Ovary (tissue), 10 donors: ENCODE measurements at regions of chr14 and their contacts with region 1.

Region 1: DNA sequence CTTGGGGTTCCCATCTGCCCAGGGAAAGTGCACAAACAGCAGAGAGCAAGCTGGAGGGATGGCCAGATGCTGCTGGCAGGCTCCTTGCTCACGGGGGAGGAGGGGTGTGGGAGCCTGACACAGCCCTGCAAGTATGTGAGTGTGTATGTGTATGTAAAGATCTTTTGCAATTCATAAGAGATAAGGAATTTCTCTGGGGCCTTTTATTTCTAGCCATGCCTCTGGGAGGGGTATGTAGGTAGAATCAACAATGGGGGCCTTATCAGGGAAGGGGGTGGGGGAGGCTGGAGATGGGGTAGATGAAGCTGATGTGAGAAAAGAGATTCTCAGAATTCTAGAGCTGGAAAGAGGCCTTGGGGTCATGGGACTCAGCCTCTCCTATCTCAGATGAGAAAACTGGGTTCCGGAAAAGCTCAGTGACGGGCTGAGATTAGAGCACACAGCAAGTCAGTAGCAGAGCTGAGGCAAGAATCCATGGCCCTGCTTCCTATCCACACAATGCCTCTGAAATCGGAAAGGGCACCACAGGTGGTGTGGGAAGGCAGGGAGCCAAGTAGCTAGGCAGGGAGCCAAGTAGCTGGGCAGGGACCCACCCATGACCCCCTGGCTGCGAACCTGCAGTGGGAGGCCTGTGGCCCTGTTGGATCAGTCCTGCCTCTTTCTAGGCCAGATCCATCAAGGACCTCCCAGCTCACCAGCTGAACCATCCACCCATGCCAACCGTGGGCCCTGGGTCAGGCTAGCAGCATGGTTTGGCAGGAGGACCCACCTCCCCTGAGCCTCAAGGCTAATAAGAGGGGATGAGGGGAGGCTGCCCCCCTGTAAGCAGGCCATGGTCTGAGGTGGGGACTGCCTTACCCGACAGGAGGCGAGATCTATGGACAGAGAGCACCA is 54.7 kb downstream of the PLEKHG3 start:
- DNase-seq: peak; percentile 68 to 80 (median 75)
- H3K4me3 ChIP-seq: no peak overlapping the region
- H3K27ac ChIP-seq: peak overlapping the region; percentile 18 to 60
- H3K4me1 ChIP-seq: peaks cover 34% of the 10 kb centered on the region
- H3K27me3 ChIP-seq: no peaks in the 10 kb centered on the region
- CTCF ChIP-seq: no peak
- EP300 ChIP-seq: no peak
- POLR2A ChIP-seq: no peak

Region 2: DNA sequence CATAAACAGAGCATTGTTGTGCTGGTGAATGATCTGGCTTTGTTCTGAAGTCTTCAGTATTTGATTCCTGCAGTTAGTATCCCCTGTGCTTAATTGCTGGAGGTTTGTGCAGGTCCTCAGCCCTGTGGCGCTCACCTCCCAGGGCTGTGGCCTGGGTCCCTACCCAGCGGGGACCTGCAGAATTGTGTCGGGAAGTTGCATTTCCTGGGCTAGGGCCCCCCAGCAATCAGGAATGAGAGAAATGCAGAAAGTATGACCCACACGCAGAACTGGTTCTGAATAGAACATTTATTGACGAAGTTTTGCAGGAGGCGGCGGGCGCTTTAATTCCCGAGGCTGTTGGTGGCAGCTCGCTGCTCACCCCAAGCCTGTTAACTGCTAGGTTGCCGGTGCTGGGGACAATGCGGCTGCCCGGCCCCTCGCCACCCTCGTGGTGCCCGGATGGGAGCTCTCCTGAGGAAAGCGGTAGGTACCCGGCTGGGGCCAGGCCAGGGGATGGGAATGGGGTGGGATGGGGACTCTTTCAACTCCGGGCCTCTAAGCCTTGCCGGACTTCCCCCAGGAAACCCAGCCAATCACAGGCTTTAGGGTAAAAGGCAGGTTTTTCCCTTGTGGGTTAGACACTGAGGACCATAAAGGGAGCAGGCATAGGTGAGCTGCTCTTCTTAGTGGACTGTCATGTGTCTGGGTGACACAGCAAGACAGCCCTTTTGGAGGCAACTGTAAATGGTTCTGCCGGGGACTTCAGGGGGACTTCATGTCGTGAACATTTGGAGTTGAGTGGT is 43.1 kb before region 1 on chr14:
- intact Hi-C with region 1: loop called in 1 of 4 experiments (anchors 5 kb)
- DNase-seq: peak in 3 of 5 donors; percentile 38 to 62 (median 48)
- H3K4me3 ChIP-seq: peak overlapping the region; percentile 38
- H3K27ac ChIP-seq: peak overlapping the region; percentile 70 to 74
- H3K4me1 ChIP-seq: peaks cover 35% of the 10 kb centered on the region
- H3K27me3 ChIP-seq: no peaks in the 10 kb centered on the region
- CTCF ChIP-seq: no peak
- EP300 ChIP-seq: no peak
- POLR2A ChIP-seq: no peak

Region 3: DNA sequence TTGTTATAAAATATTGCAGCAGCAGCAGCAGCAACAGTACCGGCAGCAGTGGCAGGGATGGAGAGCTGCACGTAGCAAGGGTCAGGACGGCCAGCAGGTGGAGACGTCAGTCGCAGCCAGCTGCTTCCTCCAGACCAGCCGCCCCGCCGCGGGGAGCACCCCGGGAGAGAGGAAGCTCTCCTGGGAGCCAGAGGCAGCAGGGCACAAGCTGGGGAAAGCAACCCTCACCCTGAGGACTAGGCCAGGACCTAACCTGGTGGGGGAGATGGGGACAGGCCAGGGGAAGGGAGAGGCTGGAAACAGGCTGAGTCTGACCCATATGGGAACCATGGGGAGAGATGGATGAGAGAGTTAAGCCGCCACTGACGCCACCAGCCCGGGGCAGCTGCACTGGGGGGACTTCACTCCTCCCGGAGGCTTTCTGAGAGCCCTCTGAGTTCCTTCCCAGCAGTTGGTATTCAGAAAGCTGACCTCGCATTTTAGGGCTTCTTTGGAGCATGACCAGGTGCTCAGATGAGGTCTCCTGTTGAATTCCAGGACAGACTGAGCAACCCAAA is 64.4 kb after region 1 on chr14:
- intact Hi-C with region 1: no loop called
- DNase-seq: peak; percentile 62 to 85 (median 70)
- H3K4me3 ChIP-seq: no peak overlapping the region
- H3K27ac ChIP-seq: no peak overlapping the region
- H3K4me1 ChIP-seq: no peaks in the 10 kb centered on the region
- H3K27me3 ChIP-seq: no peaks in the 10 kb centered on the region
- CTCF ChIP-seq: peak; percentile 29 to 56 (median 46)
- EP300 ChIP-seq: no peak
- POLR2A ChIP-seq: no peak

Region 4: DNA sequence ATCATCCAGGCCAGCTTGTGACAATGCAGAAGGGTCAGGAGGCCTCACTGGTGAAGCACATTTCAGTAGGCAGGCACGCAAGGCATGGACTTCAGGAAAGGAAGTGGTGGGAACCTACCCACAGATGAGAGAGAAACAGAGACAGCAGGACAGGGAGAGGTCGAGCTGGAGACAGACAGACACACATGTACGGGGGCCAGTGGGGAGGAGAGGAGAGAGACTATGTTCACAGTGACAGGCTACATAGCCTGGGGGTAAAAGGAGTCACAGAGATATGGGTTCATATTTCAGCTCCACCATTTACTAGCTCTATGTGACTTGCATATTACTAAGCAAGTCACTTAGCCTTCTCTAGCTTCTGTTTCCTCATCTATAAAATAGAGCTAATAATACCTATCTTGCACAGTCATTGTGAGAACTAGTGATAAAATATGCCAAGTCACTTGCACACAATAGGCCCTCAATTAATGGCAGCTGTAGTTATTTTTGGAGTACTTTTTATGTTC is 562.5 kb after region 1 on chr14:
- intact Hi-C with region 1: no loop called
- DNase-seq: no peak
- H3K4me3 ChIP-seq: no peak overlapping the region
- H3K27ac ChIP-seq: no peak overlapping the region
- H3K4me1 ChIP-seq: no peaks in the 10 kb centered on the region
- H3K27me3 ChIP-seq: no peaks in the 10 kb centered on the region
- CTCF ChIP-seq: no peak
- EP300 ChIP-seq: no peak
- POLR2A ChIP-seq: no peak